Naive thymus-derived CD4-positive, alpha-beta T cell (primary cell): ENCODE measurements at regions of chr16 and their contacts with region 1.

Region 1: DNA sequence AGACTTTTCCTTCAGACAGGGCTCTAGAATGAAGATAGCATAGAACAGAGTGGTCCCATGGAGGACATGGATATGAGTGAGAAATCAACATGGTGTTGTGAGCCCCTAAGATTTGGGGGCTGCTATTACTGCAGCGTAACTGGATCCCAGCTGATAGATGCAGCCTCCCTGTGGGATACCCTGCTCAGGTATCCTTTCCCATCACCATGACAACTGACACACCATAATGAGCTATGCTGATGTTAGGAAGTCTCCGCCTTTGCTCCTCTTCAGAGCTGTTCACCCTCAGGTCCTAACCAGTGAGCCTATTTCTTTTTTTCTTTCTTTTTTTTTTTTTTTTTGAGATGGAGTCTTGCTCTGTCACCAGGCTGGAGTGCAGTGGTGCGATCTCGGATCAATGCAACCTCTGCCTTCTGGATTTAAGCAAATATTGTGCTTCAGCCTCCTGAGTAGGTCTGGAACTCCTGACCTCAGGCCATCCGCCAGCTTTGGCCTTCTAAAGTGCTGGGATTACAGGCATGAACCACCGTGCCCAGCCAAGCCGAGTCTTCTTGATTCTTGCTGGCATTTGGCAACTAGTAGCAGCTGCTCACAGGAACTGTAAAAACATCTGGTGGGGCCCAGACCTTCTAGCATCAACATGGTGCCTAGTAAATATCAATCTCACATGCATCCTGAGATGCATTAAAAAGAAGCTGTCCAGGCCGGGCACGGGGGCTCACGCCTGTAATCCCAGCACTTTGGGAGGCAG is 17.1 kb downstream of the STX4 start:
- DNase-seq: no peak
- ATAC-seq: no peak
- H3K4me3 ChIP-seq: no peak overlapping the region
- H3K4me3 Mint-ChIP-seq: no peak overlapping the region
- H3K27ac ChIP-seq: no peak overlapping the region
- H3K27ac Mint-ChIP-seq: peak overlapping the region in 1 of 9 donors; percentile 20
- H3K4me1 ChIP-seq: no peaks in the 10 kb centered on the region
- H3K4me1 Mint-ChIP-seq: peaks cover 0 to 9% (median 0%) of the 10 kb centered on the region in 7 donors
- H3K27me3 ChIP-seq: no peaks in the 10 kb centered on the region
- H3K27me3 Mint-ChIP-seq: no peaks in the 10 kb centered on the region

Region 2: GRCh38 chr16:30669896-30670797 is 380.3 kb before region 1 on chr16:
- CTCF ChIA-PET with region 1: no interaction called
- POLR2A ChIA-PET with region 1: no interaction called
- intact Hi-C with region 1: no loop called
- DNase-seq: no peak
- ATAC-seq: peak; percentile 6
- H3K4me3 ChIP-seq: no peak overlapping the region
- H3K4me3 Mint-ChIP-seq: no peak overlapping the region
- H3K27ac ChIP-seq: no peak overlapping the region
- H3K27ac Mint-ChIP-seq: no peak overlapping the region
- H3K4me1 ChIP-seq: peaks cover 0 to 3% of the 10 kb centered on the region in 2 donors
- H3K4me1 Mint-ChIP-seq: peaks cover 0 to 10% (median 4%) of the 10 kb centered on the region in 7 donors
- H3K27me3 ChIP-seq: no peaks in the 10 kb centered on the region
- H3K27me3 Mint-ChIP-seq: no peaks in the 10 kb centered on the region

Region 3: GRCh38 chr16:31067342-31067741 is 16.9 kb after region 1 on chr16:
- CTCF ChIA-PET with region 1: no interaction called
- POLR2A ChIA-PET with region 1: no interaction called
- intact Hi-C with region 1: loop called in 1 of 2 experiments (anchors 2 kb)
- DNase-seq: no peak
- ATAC-seq: no peak
- H3K4me3 ChIP-seq: no peak overlapping the region
- H3K4me3 Mint-ChIP-seq: no peak overlapping the region
- H3K27ac ChIP-seq: no peak overlapping the region
- H3K27ac Mint-ChIP-seq: peak overlapping the region in 2 of 9 donors; percentile 31 to 73
- H3K4me1 ChIP-seq: peaks cover 24 to 41% of the 10 kb centered on the region in 2 donors
- H3K4me1 Mint-ChIP-seq: peaks cover 38 to 63% (median 51%) of the 10 kb centered on the region in 7 donors
- H3K27me3 ChIP-seq: no peaks in the 10 kb centered on the region
- H3K27me3 Mint-ChIP-seq: no peaks in the 10 kb centered on the region